Activated T-helper 2 cell treated with anti-CD3 and anti-CD28 coated beads, Interferon-gamma antibody, Interleukin-2, Interleukin-4, amounts not matched to agents 10 μg/mL and 5 μg/mL and 100 μg/mL, durations not matched to agents 14 hours and 24 hours and 36 hours (primary cell): ENCODE measurements at regions of chr9 and their contacts with region 1.

Region 1: DNA sequence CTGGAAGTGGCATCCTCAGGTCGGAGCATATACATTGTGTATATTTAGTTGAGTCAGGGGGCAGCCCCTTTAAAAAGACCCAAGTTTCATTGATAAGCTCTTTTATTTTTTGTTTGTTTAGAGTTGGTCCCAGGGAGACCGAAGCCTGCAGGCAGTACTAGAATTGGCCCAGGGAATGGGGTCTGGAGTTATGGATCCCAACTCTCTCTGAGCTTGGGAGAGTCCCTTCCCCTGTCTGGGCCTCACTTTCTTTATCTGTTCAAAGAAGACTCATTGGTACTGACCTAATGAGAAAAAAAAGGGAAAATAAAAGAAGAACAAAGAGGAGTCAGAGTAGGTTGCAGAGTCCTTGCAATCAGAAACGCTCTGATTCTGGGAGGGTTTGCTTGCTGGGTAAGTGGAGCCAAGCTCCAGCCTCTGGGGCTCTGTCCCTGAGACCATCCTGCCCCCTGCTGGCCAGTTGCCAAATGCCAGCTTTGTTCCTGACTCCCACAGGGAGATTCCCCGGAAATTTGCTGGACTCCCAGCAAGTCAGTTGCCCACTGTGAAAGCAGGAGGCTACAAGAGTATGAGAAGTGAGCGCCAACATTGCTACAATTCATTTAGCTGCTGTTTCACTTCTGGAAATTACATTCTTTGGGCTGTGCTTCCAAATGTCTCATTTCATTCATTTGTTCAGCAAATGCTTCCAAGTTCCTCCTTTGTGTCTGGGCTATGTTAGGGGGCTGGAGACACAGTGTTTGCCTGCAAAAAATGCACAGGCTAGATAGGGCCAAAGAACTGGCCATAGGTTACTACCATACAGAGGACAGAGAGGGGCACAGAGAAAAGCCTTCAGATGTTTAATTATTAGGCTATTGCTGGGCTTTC is 156.2 kb downstream of the MELK start:
- DNase-seq: peak; percentile 35
- H3K4me3 Mint-ChIP-seq: no peak overlapping the region
- H3K27ac Mint-ChIP-seq: no peak overlapping the region
- H3K4me1 Mint-ChIP-seq: peaks cover 3% of the 10 kb centered on the region
- H3K27me3 Mint-ChIP-seq: no peaks in the 10 kb centered on the region

Region 2: GRCh38 chr9:36407122-36407723 is 321.7 kb before region 1 on chr9:
- intact Hi-C with region 1: loop called (anchors 1 kb)
- DNase-seq: peak; percentile 37
- H3K4me3 Mint-ChIP-seq: no peak overlapping the region
- H3K27ac Mint-ChIP-seq: peak overlapping the region; percentile 27
- H3K4me1 Mint-ChIP-seq: peaks cover 4% of the 10 kb centered on the region
- H3K27me3 Mint-ChIP-seq: no peaks in the 10 kb centered on the region

Region 3: DNA sequence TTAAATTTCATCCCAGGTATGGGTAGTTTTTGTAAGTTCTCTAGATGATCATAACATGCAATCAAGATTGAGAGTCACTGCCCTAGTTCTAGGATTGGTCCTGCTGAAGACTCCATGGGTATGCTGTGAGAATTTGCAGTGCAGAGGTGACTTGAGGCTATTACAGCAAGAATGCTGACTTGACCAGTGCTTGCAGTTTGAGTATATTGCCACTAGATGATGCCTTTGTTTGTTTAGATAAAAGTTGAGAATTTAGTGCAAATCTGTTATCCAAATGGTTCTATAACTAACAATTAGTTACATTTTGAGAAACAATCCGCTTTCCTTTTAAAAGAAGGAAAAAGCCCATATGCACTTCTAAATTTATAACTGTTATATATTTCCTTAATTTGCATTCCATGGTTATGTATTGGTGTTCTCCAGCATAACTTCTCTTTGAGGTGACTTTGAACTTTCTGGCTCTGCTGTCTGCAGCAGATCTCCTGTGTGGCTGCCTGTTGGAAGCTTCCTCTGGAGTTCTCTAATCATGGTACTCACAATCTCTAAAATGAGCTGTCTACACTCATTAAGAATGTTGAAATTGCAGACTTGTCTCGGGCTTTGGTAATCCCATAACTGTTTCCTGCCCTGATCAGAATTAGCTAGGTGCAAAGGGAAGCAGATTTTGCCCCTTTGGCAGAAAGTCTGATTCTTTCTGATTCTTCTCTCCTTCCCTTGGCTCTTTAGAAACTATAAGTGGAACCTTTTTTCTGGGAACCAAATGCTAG is 131.3 kb before region 1 on chr9:
- intact Hi-C with region 1: loop called (anchors 5 kb)
- DNase-seq: no peak
- H3K4me3 Mint-ChIP-seq: no peak overlapping the region
- H3K27ac Mint-ChIP-seq: peak overlapping the region; percentile 74
- H3K4me1 Mint-ChIP-seq: peaks cover 11% of the 10 kb centered on the region
- H3K27me3 Mint-ChIP-seq: no peaks in the 10 kb centered on the region

Region 4: DNA sequence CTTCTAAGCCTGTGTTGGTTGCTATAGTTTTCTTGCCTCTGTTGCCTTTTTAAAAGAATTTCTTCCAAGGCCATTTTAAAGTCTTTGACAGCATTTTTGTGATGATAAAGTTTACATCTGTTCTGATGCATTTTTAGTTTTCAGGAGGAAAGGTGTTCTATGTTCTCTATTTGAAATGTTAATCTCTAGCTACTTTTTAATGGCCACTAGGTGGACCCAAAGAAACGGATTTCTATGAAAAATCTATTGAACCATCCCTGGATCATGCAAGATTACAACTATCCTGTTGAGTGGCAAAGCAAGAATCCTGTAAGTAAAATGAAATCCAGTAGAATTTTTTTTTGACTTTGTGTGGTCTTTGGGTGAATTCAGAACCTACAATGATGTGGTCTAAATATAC is 96.0 kb before region 1 on chr9:
- intact Hi-C with region 1: loop called (anchors 1 kb)
- DNase-seq: no peak
- H3K4me3 Mint-ChIP-seq: no peak overlapping the region
- H3K27ac Mint-ChIP-seq: no peak overlapping the region
- H3K4me1 Mint-ChIP-seq: peaks cover 3% of the 10 kb centered on the region
- H3K27me3 Mint-ChIP-seq: no peaks in the 10 kb centered on the region

Region 5: DNA sequence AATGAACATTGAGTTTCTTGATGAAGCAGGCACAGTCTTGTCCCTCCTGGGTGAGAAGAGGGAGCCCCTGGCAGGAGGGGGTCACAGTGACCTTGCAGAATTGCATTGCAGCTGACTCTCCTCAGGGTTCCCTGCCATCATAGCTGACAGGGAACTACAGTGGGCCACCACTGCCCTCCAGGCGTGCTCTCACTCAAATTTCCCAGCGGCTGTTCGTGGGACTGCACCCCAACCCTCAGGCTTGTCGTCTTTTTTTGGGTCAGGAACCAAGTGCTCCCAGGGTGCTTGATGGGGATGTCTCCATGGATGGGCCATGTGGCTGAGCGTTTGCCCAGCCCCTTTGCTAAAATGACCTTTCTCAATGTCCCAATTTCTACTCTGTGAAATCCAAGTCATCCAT is 59.6 kb after region 1 on chr9:
- intact Hi-C with region 1: no loop called
- DNase-seq: no peak
- H3K4me3 Mint-ChIP-seq: no peak overlapping the region
- H3K27ac Mint-ChIP-seq: no peak overlapping the region
- H3K4me1 Mint-ChIP-seq: no peaks in the 10 kb centered on the region
- H3K27me3 Mint-ChIP-seq: peaks cover 3% of the 10 kb centered on the region